Ovary (tissue), 10 donors: ENCODE measurements at regions of chr2 and their contacts with region 1.

Region 1: DNA sequence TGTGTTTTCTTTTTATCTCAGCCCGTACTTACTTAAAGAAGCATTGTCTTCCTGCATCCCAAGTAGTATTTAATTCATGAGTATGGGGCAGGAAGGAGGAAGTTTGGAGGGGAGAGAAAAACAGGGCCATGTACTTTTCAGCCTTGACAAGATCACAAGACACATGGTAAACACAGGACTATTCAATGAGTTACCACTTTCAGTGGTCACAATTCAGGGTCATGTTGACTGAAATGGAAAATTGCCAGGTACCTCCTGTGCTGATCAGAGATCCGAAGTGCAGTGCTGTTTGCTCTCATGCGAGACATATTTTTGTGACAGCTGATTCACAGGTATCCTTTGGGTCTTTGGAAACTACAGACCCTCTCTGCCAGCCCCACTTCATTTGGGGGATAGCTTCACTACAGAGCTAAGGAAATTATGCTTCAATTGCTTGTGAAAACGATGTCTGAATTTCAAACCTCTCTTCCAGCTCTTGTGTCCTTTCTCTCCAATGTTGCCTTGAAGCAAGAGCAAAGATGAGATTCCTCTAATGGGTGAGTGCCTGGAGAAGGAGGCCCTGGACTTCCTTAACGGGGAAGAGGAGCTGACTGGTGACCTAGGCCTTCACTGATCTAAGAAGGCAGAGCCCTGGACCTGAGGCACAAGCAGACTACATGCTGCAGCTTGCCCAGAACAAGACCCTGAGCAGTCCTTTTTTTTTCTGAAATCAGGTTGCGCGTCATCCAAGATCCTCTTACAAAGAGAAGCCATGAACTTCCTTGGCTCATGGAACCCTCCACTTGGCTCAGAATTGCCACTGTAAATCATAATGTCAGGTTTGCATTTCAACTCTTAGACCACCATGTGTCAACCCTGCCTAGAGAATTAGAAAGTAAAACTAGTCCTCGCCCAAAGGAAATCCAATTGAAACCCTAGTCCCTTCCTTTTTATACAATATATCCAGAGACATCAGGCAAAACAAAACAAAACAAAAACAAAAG is 44.1 kb downstream of the EVA1A start:
- DNase-seq: no peak
- H3K4me3 ChIP-seq: no peak overlapping the region
- H3K27ac ChIP-seq: no peak overlapping the region
- H3K4me1 ChIP-seq: no peaks in the 10 kb centered on the region
- H3K27me3 ChIP-seq: no peaks in the 10 kb centered on the region
- CTCF ChIP-seq: no peak
- EP300 ChIP-seq: no peak
- POLR2A ChIP-seq: no peak

Region 2: GRCh38 chr2:75340560-75341330 is 175.9 kb before region 1 on chr2:
- intact Hi-C with region 1: no loop called
- DNase-seq: no peak
- H3K4me3 ChIP-seq: no peak overlapping the region
- H3K27ac ChIP-seq: no peak overlapping the region
- H3K4me1 ChIP-seq: peaks cover 9% of the 10 kb centered on the region
- H3K27me3 ChIP-seq: no peaks in the 10 kb centered on the region
- CTCF ChIP-seq: no peak
- EP300 ChIP-seq: no peak
- POLR2A ChIP-seq: no peak

Region 3: DNA sequence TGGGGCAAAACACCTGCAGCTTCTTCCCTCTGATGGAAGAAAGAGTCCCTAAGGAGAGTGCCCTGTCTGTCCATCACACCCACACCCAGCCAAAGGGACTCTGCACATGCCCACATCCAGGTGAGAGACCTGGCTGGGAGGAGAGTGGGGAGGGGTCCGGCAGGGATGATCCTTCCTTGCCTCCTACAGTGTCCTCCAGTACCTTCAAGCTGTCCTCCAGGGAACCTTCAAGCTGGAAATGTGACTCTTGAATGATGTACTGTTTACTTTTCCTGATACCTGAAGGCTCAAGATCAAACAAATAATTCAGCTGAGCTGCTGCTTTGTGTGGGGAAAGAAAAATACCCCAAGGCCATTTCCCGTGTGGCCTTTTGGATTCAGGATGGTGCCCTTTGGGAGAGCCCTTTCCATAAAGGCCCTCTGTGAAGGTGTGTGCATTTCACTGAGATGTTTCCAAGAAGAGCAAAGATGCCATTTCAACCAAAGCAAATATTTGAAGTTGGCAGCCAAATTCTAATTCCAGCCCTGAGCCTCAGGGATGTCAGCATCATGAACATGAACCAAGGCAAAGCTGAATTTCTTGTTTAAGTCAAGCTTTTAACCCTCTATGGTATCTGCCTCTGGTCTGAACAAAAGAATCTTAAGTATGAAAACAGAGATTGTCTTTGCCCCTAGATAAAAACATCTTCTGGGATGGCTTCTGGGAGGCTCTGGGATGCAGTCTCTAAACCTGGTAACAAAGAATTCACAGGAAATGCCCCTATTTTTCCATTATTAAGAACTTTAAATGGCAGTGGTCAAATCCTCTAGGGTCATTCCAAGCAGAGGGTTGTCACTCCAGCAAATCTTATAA is 33.0 kb after region 1 on chr2:
- intact Hi-C with region 1: loop called in 1 of 4 experiments (anchors 5 kb)
- DNase-seq: no peak
- H3K4me3 ChIP-seq: no peak overlapping the region
- H3K27ac ChIP-seq: no peak overlapping the region
- H3K4me1 ChIP-seq: no peaks in the 10 kb centered on the region
- H3K27me3 ChIP-seq: no peaks in the 10 kb centered on the region
- CTCF ChIP-seq: no peak
- EP300 ChIP-seq: no peak
- POLR2A ChIP-seq: no peak